MCF 10A (cell line): ENCODE measurements at regions of chr14 and their contacts with region 1.

Region 1: GRCh38 chr14:41830679-41831078 is 224.0 kb downstream of the LRFN5 start:
- DNase-seq: peak; percentile 70
- H3K4me3 Mint-ChIP-seq: no peak overlapping the region
- H3K27ac Mint-ChIP-seq: peak overlapping the region; percentile 63
- H3K4me1 Mint-ChIP-seq: peaks cover 23% of the 10 kb centered on the region
- H3K27me3 Mint-ChIP-seq: peaks cover 25% of the 10 kb centered on the region
- CTCF ChIP-seq: no peak

Region 2: GRCh38 chr14:41404126-41404525 is 426.6 kb before region 1 on chr14:
- CTCF ChIA-PET with region 1: no interaction called
- POLR2A ChIA-PET with region 1: no interaction called
- intact Hi-C with region 1: no loop called
- DNase-seq: no peak
- H3K4me3 Mint-ChIP-seq: no peak overlapping the region
- H3K27ac Mint-ChIP-seq: no peak overlapping the region
- H3K4me1 Mint-ChIP-seq: no peaks in the 10 kb centered on the region
- H3K27me3 Mint-ChIP-seq: peaks cover 28% of the 10 kb centered on the region
- CTCF ChIP-seq: no peak

Region 3: DNA sequence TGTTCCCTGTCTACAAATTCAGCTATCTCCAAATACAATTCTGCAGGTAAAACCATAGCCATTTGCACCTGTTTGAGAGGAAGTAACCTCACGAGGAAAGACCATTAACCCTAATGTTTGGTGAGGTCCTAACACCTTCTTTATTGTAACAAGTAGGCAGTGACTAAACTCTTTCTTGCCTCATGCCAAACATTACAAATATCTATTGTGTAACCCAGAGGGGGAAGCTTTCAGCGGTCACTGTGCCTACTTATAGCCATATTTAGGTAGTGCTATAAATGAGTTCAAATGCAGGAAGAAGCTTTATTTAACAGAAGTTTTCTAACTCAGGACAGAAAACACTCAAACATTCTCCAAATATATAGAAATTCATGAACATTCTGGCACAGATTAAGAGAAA is 28.7 kb after region 1 on chr14:
- CTCF ChIA-PET with region 1: no interaction called
- POLR2A ChIA-PET with region 1: interaction called, 12 read pairs
- intact Hi-C with region 1: no loop called
- DNase-seq: peak; percentile 67
- H3K4me3 Mint-ChIP-seq: no peak overlapping the region
- H3K27ac Mint-ChIP-seq: no peak overlapping the region
- H3K4me1 Mint-ChIP-seq: no peaks in the 10 kb centered on the region
- H3K27me3 Mint-ChIP-seq: peaks cover 66% of the 10 kb centered on the region
- CTCF ChIP-seq: no peak